A549 (cell line): ENCODE measurements at regions of chr22 and their contacts with region 1.

Region 1: GRCh38 chr22:20013382-20013871 is 3.2 kb downstream of the ARVCF start:
- DNase-seq: peak in 1 of 2 experiments; percentile 33
- ATAC-seq: peak in 1 of 2 experiments; percentile 67; a peak in 3 of 6 replicates
- H3K4me3 ChIP-seq: no peak overlapping the region
- H3K27ac ChIP-seq: no peak overlapping the region
- H3K4me1 ChIP-seq: peaks cover 5% of the 10 kb centered on the region; the same call in 1 of the 3 replicates
- CTCF ChIP-seq: peak; percentile 37; the same call in 2 of the 3 replicates
- EP300 ChIP-seq: no peak
- POLR2A ChIP-seq: no peak
- RAD21 ChIP-seq: peak; percentile 31 to 53; a peak in 2 of 5 replicates

Region 2: DNA sequence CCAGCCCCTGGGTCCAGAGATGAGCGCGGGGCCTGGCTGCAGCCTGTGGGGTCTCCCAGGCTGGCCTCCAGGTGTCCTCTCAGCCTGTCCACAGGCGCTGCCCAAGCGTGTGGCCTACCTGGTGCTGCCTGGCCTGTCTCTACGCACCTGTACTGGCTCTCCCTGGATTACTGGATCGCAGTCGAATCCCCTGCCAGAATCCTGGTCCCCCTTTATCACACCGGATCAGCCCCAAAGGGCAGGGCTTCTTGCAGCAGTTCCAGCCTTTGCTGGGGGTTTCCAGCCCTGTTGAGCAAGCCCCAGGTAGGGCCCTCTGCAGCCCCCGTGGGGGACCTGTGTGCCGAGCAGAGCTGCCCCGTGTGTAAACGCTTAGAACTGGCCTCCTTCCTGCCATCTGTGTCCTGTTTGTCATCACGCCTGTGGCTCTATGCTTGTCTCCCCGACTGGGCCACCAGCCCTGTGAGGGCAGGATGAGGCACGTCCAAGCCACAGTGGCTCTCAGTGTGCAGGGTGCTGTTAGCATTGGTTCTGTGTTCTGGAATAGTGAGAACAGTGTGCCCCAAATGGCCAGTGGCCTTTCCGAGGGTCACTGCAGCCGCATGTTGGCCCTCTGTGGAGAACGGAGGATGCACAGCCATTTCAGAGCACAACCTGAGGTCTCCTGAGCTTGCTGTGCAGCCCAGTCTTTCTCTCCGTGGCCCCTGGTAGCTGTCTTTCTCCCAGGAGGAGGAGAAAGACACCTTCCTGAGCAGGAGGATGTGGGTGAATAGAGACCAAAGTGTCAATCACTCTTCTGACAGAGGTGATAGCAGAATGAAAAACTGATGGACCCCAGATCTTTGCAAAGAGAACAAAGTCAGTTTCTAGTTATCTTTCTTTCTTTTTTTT is 57.9 kb before region 1 on chr22:
- CTCF ChIA-PET with region 1: interaction called, 10 read pairs
- POLR2A ChIA-PET with region 1: no interaction called
- DNase-seq: no peak
- ATAC-seq: no peak
- H3K4me3 ChIP-seq: no peak overlapping the region
- H3K27ac ChIP-seq: no peak overlapping the region
- H3K4me1 ChIP-seq: peaks cover 11% of the 10 kb centered on the region; the same call in 1 of the 3 replicates
- CTCF ChIP-seq: no peak
- EP300 ChIP-seq: no peak
- POLR2A ChIP-seq: no peak
- RAD21 ChIP-seq: no peak

Region 3: GRCh38 chr22:19962233-19962908 is 51.1 kb before region 1 on chr22:
- CTCF ChIA-PET with region 1: interaction called, 15 read pairs
- POLR2A ChIA-PET with region 1: no interaction called
- DNase-seq: peak; percentile 47 to 77
- ATAC-seq: peak; percentile 66 to 83
- H3K4me3 ChIP-seq: no peak overlapping the region
- H3K27ac ChIP-seq: no peak overlapping the region
- H3K4me1 ChIP-seq: peaks cover 7% of the 10 kb centered on the region; the same call in 1 of the 3 replicates
- CTCF ChIP-seq: peak; percentile 36
- EP300 ChIP-seq: no peak
- POLR2A ChIP-seq: no peak
- RAD21 ChIP-seq: no peak

Region 4: GRCh38 chr22:19970479-19971275 is 42.8 kb before region 1 on chr22:
- CTCF ChIA-PET with region 1: interaction called, 89 read pairs
- POLR2A ChIA-PET with region 1: interaction called, 3 read pairs
- DNase-seq: peak; percentile 57 to 62
- ATAC-seq: peak; percentile 44 to 79
- H3K4me3 ChIP-seq: no peak overlapping the region
- H3K27ac ChIP-seq: no peak overlapping the region
- H3K4me1 ChIP-seq: peaks cover 5% of the 10 kb centered on the region; the same call in 1 of the 3 replicates
- CTCF ChIP-seq: peak; percentile 70
- EP300 ChIP-seq: no peak
- POLR2A ChIP-seq: no peak
- RAD21 ChIP-seq: peak; percentile 72 to 76

Region 5: DNA sequence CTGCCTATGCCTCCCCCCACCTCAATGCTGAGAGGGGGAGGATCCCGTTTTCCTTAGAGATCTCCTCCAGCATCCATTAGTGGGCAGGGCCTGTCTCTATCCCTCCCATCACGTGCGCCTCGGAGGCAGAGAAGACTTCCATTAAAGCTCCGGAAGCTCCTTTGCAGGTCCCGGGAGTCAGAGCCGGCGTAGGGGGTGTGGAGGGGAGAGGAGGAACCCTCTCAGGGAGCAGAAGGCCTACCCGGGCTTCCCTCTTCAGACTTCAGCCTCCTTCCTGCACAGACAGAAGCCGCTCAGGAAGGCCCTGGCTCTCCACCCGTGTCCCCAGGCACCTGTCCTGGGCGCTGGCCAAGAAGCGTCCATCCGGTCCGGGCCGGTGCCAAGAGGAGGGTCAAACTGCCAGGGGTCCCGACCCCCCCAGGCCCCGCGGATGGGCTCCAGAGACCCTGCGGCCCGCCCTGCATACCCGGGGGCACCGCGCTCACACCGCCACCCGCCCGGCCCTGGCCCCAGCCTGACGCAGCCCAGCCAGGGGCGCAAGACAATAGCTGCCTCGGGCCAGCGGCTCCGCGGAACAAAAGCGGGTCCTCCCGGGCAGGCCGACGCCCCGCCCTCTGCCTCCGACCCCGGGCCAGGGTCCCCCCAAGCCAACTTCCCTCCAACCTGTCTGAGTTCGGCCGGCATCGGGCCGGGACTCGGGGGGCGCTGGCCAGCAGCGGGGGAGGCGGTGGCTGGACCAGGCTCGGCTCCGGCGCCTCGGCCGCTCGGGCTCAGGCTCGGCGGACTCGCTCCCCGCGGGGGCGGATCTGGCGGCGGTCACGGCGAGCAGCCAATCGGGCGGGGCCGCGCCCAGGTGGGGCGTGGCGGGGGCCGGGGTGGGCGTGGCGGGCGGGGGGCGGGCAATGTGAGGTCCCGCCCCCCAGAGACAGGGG is 26.8 kb before region 1 on chr22:
- CTCF ChIA-PET with region 1: interaction called, 14 read pairs
- POLR2A ChIA-PET with region 1: interaction called, 3 read pairs
- DNase-seq: peak; percentile 41 to 70
- ATAC-seq: peak; percentile 68 to 86
- H3K4me3 ChIP-seq: peak overlapping the region; percentile 68
- H3K27ac ChIP-seq: peak overlapping the region; percentile 68 to 83; a peak in 5 of 6 replicates
- H3K4me1 ChIP-seq: peaks cover 20% of the 10 kb centered on the region
- CTCF ChIP-seq: no peak
- EP300 ChIP-seq: no peak
- POLR2A ChIP-seq: no peak
- RAD21 ChIP-seq: no peak

Region 6: GRCh38 chr22:19991645-19992451 is 21.6 kb before region 1 on chr22:
- CTCF ChIA-PET with region 1: interaction called, 14 read pairs
- POLR2A ChIA-PET with region 1: no interaction called
- DNase-seq: no peak
- ATAC-seq: no peak
- H3K4me3 ChIP-seq: no peak overlapping the region
- H3K27ac ChIP-seq: no peak overlapping the region
- H3K4me1 ChIP-seq: no peaks in the 10 kb centered on the region
- CTCF ChIP-seq: no peak
- EP300 ChIP-seq: no peak
- POLR2A ChIP-seq: no peak
- RAD21 ChIP-seq: no peak

Region 7: GRCh38 chr22:20174785-20175596 is 161.6 kb after region 1 on chr22:
- CTCF ChIA-PET with region 1: no interaction called
- POLR2A ChIA-PET with region 1: no interaction called
- DNase-seq: no peak
- ATAC-seq: peak; percentile 35 to 76; a peak in 4 of 6 replicates
- H3K4me3 ChIP-seq: no peak overlapping the region
- H3K27ac ChIP-seq: no peak overlapping the region
- H3K4me1 ChIP-seq: no peaks in the 10 kb centered on the region
- CTCF ChIP-seq: no peak
- EP300 ChIP-seq: no peak
- POLR2A ChIP-seq: no peak
- RAD21 ChIP-seq: no peak

Region 8: DNA sequence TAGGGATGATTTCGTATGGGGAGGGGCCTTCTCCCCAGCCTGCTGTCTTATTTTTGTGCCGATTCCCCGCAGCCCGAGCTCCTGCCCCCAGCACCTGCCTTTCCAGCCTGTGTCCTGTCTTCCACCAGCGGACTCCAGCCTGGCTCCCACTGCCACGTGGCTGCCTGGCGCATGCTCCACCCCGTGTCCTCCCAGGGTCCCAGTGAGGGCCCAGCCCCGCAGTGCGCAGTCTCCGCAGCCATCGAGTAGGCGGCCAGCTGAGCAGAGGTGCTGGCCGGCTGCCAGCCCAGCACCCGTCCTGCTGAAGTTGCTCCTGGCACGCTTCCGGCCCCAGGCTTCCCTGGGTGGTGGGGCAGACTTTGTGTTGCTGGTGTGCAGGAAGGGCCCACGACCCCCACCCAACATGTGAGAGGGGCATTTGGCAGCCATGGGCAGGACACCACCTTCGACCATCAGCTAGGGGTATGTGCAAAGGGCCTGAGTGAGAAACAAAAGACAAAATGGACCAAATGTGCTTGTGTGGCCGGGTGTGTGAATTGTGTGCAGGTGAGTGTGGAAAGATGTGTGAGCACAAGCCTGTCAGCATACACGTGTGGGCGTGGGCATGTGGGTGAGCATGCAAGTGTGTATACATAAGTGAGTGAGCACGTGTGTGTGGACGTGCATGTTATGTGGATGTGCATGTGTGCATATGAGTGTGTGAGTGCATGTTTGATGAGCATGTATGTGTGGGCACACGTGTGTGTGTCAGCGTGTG is 198.7 kb after region 1 on chr22:
- CTCF ChIA-PET with region 1: no interaction called
- POLR2A ChIA-PET with region 1: no interaction called
- DNase-seq: no peak
- ATAC-seq: no peak
- H3K4me3 ChIP-seq: no peak overlapping the region
- H3K27ac ChIP-seq: no peak overlapping the region
- H3K4me1 ChIP-seq: peaks cover 13% of the 10 kb centered on the region; the same call in 2 of the 3 replicates
- CTCF ChIP-seq: no peak
- EP300 ChIP-seq: no peak
- POLR2A ChIP-seq: no peak
- RAD21 ChIP-seq: no peak